ENCODE measurements at regions of chr18 and their contacts with region 1.

Region 1: GRCh38 chr18:79951578-79952455 is at the start of gene SLC66A2:
- DNase-seq: peak; percentile 86 to 96 (median 92)
- H3K4me3 ChIP-seq: peak within 1 kb of the TSS; percentile 44 to 93 (median 76)
- H3K27ac ChIP-seq: peak within 1 kb of the TSS in 4 of 5 donors; percentile 55 to 93 (median 82)
- H3K4me1 ChIP-seq: peaks cover 6 to 23% of the 10 kb centered on the region in 2 donors
- H3K27me3 ChIP-seq: no peaks in the 10 kb centered on the region
- CTCF ChIP-seq: no peak
- POLR2A ChIP-seq: peak; percentile 39 to 70
- total RNA-seq, gene SLC66A2: 12.5 to 47.8 (median 32.6) TPM

Region 2: GRCh38 chr18:79644006-79644665 is 307.7 kb before region 1 on chr18:
- intact Hi-C with region 1: no loop called
- DNase-seq: peak; percentile 31 to 71 (median 58)
- H3K4me3 ChIP-seq: no peak overlapping the region
- H3K27ac ChIP-seq: no peak overlapping the region
- H3K4me1 ChIP-seq: no peaks in the 10 kb centered on the region
- H3K27me3 ChIP-seq: peaks cover 12% of the 10 kb centered on the region
- CTCF ChIP-seq: peak; percentile 76 to 98 (median 90)
- POLR2A ChIP-seq: no peak

Region 3: GRCh38 chr18:79680123-79680879 is 271.5 kb before region 1 on chr18:
- intact Hi-C with region 1: loop called in 1 of 2 experiments (anchors 10 kb)
- DNase-seq: peak; percentile 34 to 75 (median 55)
- H3K4me3 ChIP-seq: peak overlapping the region; percentile 54 to 87 (median 74)
- H3K27ac ChIP-seq: peak overlapping the region in 4 of 5 donors; percentile 96 to 100 (median 98)
- H3K4me1 ChIP-seq: peaks cover 18 to 30% of the 10 kb centered on the region in 2 donors
- H3K27me3 ChIP-seq: no peaks in the 10 kb centered on the region
- CTCF ChIP-seq: no peak
- POLR2A ChIP-seq: peak in 1 of 2 donors; percentile 14